Posterior vena cava (tissue), 2 donors: ENCODE measurements at regions of chr5 and their contacts with region 1.

Region 1: GRCh38 chr5:40347981-40348725 is 331.6 kb upstream of the PTGER4 start:
- DNase-seq: no peak

Region 2: GRCh38 chr5:40333459-40334244 is 14.5 kb before region 1 on chr5:
- intact Hi-C with region 1: loop called in 1 of 2 experiments (anchors 1 kb)
- DNase-seq: no peak